Activated T-helper 2 cell treated with anti-CD3 and anti-CD28 coated beads, Interferon-gamma antibody, Interleukin-2, Interleukin-4, amounts not matched to agents 10 μg/mL and 5 μg/mL and 100 μg/mL, durations not matched to agents 14 hours and 24 hours and 36 hours (primary cell): ENCODE measurements at regions of chr16 and their contacts with region 1.

Region 1: GRCh38 chr16:21646721-21647561 is 5.5 kb downstream of the IGSF6 start:
- DNase-seq: peak; percentile 76
- H3K4me3 Mint-ChIP-seq: peak overlapping the region; percentile 58
- H3K27ac Mint-ChIP-seq: peak overlapping the region; percentile 91
- H3K4me1 Mint-ChIP-seq: peaks cover 48% of the 10 kb centered on the region
- H3K27me3 Mint-ChIP-seq: no peaks in the 10 kb centered on the region

Region 2: GRCh38 chr16:21253470-21253869 is 393.5 kb before region 1 on chr16:
- intact Hi-C with region 1: no loop called
- DNase-seq: no peak
- H3K4me3 Mint-ChIP-seq: no peak overlapping the region
- H3K27ac Mint-ChIP-seq: no peak overlapping the region
- H3K4me1 Mint-ChIP-seq: no peaks in the 10 kb centered on the region
- H3K27me3 Mint-ChIP-seq: peaks cover 15% of the 10 kb centered on the region

Region 3: DNA sequence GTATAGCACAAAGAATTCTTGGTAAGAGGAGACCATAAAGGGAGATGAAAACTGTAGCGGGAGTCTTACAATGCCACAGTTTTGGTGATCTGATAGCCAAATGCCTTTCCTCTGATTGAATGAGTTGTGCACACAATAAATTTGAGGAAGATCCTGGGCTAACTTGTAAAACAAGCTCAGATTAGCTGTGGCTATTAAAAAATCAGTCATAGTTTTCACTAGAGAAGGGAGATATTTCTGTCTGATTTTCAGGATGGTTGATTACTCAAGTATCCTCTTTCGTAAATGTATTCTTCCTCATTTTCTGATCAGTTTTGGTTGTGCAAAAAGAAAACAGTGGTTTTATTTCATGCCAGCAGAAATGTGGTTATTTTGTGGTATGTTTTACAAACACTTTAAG is 56.7 kb before region 1 on chr16:
- intact Hi-C with region 1: no loop called
- DNase-seq: no peak
- H3K4me3 Mint-ChIP-seq: no peak overlapping the region
- H3K27ac Mint-ChIP-seq: no peak overlapping the region
- H3K4me1 Mint-ChIP-seq: peaks cover 3% of the 10 kb centered on the region
- H3K27me3 Mint-ChIP-seq: no peaks in the 10 kb centered on the region

Region 4: GRCh38 chr16:21684199-21684598 is 37.3 kb after region 1 on chr16:
- intact Hi-C with region 1: no loop called
- DNase-seq: no peak
- H3K4me3 Mint-ChIP-seq: no peak overlapping the region
- H3K27ac Mint-ChIP-seq: no peak overlapping the region
- H3K4me1 Mint-ChIP-seq: no peaks in the 10 kb centered on the region
- H3K27me3 Mint-ChIP-seq: peaks cover 3% of the 10 kb centered on the region

Region 5: DNA sequence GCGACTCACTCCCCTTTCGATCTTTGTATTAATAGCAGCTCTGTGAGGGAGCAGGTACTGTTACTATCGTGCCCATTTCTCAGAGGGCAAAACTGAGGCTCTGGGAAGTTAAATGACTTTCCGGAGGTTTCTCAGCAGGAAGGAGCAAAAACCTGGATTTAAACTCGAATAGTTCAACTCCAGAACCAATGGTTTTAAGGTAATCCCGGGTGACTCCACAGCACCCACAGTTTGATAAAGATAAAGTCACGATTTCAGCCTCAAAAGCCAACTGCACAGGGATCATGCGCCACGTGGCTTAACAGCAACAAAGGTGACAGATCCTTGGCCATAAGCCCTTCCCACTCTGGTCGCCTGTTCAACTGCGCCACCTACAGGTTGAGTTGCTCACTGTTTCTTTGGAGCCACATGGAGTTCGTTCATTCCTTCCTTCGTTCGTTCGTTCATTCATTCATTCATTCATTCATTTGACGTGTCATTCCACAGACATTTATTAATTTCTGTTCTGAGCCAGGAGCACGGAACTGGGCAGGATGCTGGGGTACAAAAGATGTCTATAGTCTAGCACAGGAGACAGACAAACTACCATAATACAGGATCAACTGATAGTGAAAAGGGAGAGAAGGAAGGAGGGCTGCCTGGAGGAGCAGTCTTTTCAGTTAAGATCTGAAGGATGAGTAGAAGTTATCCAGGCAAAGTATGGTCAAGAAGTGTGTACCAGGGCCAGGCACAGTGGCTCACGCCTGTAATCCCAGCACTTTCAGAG is 1301.8 kb after region 1 on chr16:
- intact Hi-C with region 1: loop called (anchors 10 kb)
- DNase-seq: peak; percentile 50
- H3K4me3 Mint-ChIP-seq: peak overlapping the region; percentile 15
- H3K27ac Mint-ChIP-seq: no peak overlapping the region
- H3K4me1 Mint-ChIP-seq: peaks cover 8% of the 10 kb centered on the region
- H3K27me3 Mint-ChIP-seq: peaks cover 37% of the 10 kb centered on the region